ENCODE measurements at regions of chr1 and their contacts with region 1.

Region 1: DNA sequence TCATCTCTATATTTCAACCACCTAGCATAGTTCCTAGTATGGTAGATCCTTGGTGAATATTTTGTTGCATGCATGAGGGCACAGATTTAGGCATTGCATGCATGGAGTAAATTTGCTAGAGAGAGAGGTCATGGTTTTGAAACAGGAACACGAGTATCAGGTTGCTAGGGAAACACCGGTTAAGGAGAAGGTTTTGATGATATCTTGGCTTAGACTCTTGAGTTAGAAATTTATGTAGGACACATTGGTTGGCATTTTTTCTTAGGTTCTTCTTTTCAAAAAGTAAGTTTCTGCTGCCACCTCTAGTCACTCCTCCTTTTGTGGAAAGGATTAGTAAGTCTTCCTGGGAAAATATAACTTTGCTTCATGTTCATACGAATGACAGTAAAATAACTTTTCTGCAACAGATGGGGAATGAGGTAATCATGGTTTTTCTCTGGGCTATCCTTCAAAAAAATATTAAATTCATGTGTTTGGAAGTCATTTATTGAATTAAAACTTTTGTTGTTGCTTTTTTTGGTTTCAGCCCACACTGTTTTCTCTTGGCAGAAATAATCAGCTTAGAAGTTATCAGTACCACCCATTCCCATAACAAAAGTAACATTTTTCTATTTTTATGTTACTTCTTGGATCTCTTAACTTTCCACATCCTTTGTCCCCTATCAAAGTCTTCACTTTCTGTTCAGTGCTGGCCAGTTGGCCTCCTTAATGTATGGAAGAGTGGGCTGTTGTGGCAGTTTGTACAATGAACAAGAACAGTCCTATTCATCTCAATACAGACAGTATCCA is 97.3 kb downstream of the PLA2G4A start:
- DNase-seq: no peak
- H3K4me3 ChIP-seq: no peak overlapping the region
- H3K27ac ChIP-seq: no peak overlapping the region
- H3K4me1 ChIP-seq: no peaks in the 10 kb centered on the region; the same call in 1 of the 2 replicates
- H3K27me3 ChIP-seq: no peaks in the 10 kb centered on the region
- CTCF ChIP-seq: no peak

Region 2: DNA sequence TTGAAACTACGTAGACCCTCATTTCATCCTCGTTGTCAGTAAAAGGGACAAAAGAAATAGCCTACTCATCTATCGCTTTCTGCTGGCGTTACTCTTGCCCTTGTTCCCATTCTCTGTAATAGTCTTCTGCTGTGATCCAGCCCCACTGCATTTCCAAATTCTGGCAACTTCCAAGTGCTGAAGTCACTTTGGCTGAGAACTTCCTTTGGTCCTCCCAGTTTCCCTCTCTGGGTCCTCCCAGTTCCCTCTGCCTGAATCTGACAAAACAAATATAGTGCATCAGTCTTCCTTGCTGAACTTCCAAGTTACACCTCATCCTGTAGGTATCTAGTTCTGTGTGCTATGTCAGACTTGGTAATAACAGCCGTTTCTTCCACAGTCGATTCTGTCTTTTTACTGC is 144.3 kb before region 1 on chr1:
- CTCF ChIA-PET with region 1: no interaction called
- POLR2A ChIA-PET with region 1: no interaction called
- intact Hi-C with region 1: no loop called
- DNase-seq: no peak
- H3K4me3 ChIP-seq: no peak overlapping the region
- H3K27ac ChIP-seq: no peak overlapping the region
- H3K4me1 ChIP-seq: no peaks in the 10 kb centered on the region
- H3K27me3 ChIP-seq: no peaks in the 10 kb centered on the region
- CTCF ChIP-seq: no peak

Region 3: DNA sequence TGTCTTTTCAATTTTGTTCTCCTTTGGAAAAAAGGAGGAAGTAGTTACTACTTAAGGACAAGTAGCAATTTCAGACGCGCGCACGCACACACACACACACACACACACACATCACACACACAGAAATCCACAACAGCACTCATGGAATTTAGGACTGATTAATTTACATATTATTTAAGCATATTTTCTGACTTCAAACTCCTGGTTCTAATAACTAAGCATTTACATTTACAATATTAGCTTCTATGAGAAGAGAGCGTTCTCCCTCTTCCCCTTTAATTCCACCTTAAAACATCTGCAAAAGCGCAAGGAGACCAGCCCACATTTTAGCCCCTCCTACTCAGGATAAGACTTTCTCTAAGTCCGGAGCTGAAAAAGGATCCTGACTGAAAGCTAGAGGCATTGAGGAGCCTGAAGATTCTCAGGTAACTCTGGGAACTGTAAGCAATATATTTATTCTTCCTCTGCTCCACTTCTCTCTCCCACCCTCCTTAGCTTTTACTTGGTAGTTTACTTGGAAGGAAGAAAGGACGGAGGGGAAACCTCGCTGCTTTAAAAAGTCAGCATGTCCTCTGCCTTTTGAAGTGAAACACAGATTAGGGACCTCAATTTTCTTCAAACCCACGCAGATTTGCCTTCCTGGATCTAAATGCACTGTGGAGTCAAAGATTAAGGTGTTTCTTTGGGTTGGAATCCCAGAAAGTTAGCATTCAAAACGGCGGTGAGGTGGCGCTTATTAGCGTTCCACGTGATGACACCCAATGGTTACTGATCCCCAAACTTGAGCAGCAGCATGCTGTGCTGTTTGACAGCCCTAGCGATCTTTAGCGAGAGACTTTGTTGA is 97.2 kb before region 1 on chr1 and contains the start of gene PLA2G4A:
- CTCF ChIA-PET with region 1: no interaction called
- POLR2A ChIA-PET with region 1: no interaction called
- intact Hi-C with region 1: loop called (anchors 5 kb)
- DNase-seq: peak in 1 of 2 experiments; percentile 22
- H3K4me3 ChIP-seq: peak within 1 kb of the TSS; percentile 58
- H3K27ac ChIP-seq: no peak within 1 kb of the TSS
- H3K4me1 ChIP-seq: no peaks in the 10 kb centered on the region
- H3K27me3 ChIP-seq: no peaks in the 10 kb centered on the region
- CTCF ChIP-seq: no peak
- total RNA-seq, gene PLA2G4A: 2.0 and 3.3 TPM in 2 replicates

Measured in PC-9 (cell line).